ENCODE measurements at regions of chrX and their contacts with region 1.

Region 1: DNA sequence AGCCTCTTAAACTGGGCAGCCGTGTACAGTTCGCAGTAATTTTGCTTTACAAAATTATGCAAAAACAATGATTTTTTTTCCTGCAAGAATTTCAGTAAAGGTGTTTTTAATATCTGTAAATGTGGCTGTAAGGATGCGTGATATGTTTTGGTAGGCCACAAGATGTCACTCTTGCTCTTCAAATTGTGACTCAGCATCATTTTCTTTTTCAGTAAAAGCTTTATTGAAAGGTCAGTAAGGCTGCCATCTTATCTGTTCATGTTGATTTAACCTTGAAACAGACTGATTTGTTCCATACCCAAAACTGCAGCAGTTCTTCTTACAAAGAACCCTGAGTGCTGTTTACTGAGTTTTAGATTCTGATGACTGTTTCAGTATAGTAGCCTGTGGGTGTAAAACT is 39.9 kb downstream of the TXLNG start:
- DNase-seq: peak; percentile 41
- ATAC-seq: no peak
- H3K4me3 ChIP-seq: no peak overlapping the region
- H3K4me3 Mint-ChIP-seq: no peak overlapping the region
- H3K27ac ChIP-seq: no peak overlapping the region
- H3K27ac Mint-ChIP-seq: no peak overlapping the region
- H3K4me1 ChIP-seq: no peaks in the 10 kb centered on the region
- H3K4me1 Mint-ChIP-seq: no peaks in the 10 kb centered on the region
- H3K27me3 ChIP-seq: no peaks in the 10 kb centered on the region
- H3K27me3 Mint-ChIP-seq: no peaks in the 10 kb centered on the region
- CTCF ChIP-seq: peak; percentile 60

Region 2: GRCh38 chrX:16712112-16712833 is 113.9 kb before region 1 on chrX and contains the start of gene CTPS2:
- CTCF ChIA-PET with region 1: no interaction called
- POLR2A ChIA-PET with region 1: no interaction called
- intact Hi-C with region 1: no loop called
- DNase-seq: peak; percentile 53
- ATAC-seq: peak; percentile 72
- H3K4me3 ChIP-seq: peak within 1 kb of the TSS; percentile 19 to 74 (median 64)
- H3K4me3 Mint-ChIP-seq: peak within 1 kb of the TSS; percentile 89
- H3K27ac ChIP-seq: peak within 1 kb of the TSS; percentile 29 to 57
- H3K27ac Mint-ChIP-seq: peak within 1 kb of the TSS; percentile 86
- H3K4me1 ChIP-seq: peaks cover 12 to 13% of the 10 kb centered on the region in 2 donors
- H3K4me1 Mint-ChIP-seq: peaks cover 19% of the 10 kb centered on the region
- H3K27me3 ChIP-seq: no peaks in the 10 kb centered on the region
- H3K27me3 Mint-ChIP-seq: no peaks in the 10 kb centered on the region
- CTCF ChIP-seq: no peak
- total RNA-seq, gene CTPS2: 11.7 and 13.2 TPM in 2 replicates

Region 3: GRCh38 chrX:16771483-16772398 is 54.5 kb before region 1 on chrX:
- CTCF ChIA-PET with region 1: no interaction called
- POLR2A ChIA-PET with region 1: no interaction called
- intact Hi-C with region 1: no loop called
- DNase-seq: no peak
- ATAC-seq: no peak
- H3K4me3 ChIP-seq: no peak overlapping the region
- H3K4me3 Mint-ChIP-seq: no peak overlapping the region
- H3K27ac ChIP-seq: no peak overlapping the region
- H3K27ac Mint-ChIP-seq: no peak overlapping the region
- H3K4me1 ChIP-seq: no peaks in the 10 kb centered on the region
- H3K4me1 Mint-ChIP-seq: peaks cover 2% of the 10 kb centered on the region
- H3K27me3 ChIP-seq: no peaks in the 10 kb centered on the region
- H3K27me3 Mint-ChIP-seq: no peaks in the 10 kb centered on the region
- CTCF ChIP-seq: no peak

Region 4: DNA sequence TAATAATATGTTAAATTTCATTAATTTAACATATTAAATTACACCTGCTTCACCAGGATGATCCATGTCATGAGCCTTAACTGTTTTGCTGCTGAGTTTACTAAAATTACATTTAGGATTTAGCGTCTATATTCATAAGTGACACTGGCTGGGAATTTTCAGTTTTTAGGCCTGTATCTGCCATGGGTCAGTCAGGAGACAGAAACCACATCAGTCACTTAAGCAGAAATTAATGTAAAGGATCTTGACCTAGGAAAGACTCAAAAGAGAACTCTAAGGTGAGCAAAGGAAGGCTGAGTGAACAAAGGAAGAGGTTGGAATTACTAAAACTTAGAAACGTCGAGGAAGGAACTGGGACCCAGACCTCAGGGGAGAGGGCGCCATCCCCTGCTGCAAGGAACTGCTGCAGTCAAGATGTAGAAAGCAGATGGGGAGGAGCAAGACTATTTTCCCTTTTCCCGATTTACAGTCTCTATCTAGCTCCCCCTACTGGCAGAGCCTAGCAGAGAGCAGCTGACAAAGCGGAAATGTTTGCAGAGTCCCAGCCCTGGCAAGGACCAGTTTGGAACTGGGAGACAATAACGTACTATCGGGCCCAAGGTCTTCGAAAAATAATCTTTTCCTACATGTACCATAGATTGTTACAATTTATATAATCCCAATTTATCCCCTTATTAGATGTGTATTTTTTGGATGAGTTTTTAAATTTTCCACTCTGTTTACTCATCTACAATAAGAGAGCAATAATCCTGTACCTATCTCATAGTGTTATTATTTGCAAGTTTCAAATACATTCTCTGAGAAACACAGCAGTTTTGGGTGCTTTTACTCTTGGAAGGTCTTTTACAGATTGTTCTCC is 66.5 kb after region 1 on chrX:
- CTCF ChIA-PET with region 1: interaction called, 28 read pairs
- POLR2A ChIA-PET with region 1: no interaction called
- intact Hi-C with region 1: loop called (anchors 1 kb)
- DNase-seq: peak; percentile 76
- ATAC-seq: peak; percentile 84
- H3K4me3 ChIP-seq: no peak overlapping the region
- H3K4me3 Mint-ChIP-seq: peak overlapping the region; percentile 30
- H3K27ac ChIP-seq: no peak overlapping the region
- H3K27ac Mint-ChIP-seq: no peak overlapping the region
- H3K4me1 ChIP-seq: peaks cover 0 to 6% of the 10 kb centered on the region in 2 donors
- H3K4me1 Mint-ChIP-seq: peaks cover 7% of the 10 kb centered on the region
- H3K27me3 ChIP-seq: no peaks in the 10 kb centered on the region
- H3K27me3 Mint-ChIP-seq: no peaks in the 10 kb centered on the region
- CTCF ChIP-seq: peak; percentile 79

Region 5: GRCh38 chrX:17046478-17047097 is 220.4 kb after region 1 on chrX:
- CTCF ChIA-PET with region 1: interaction called, 90 read pairs
- POLR2A ChIA-PET with region 1: no interaction called
- intact Hi-C with region 1: no loop called
- DNase-seq: peak; percentile 61
- ATAC-seq: peak; percentile 45
- H3K4me3 ChIP-seq: no peak overlapping the region
- H3K4me3 Mint-ChIP-seq: no peak overlapping the region
- H3K27ac ChIP-seq: no peak overlapping the region
- H3K27ac Mint-ChIP-seq: no peak overlapping the region
- H3K4me1 ChIP-seq: peaks cover 0 to 2% of the 10 kb centered on the region in 2 donors
- H3K4me1 Mint-ChIP-seq: peaks cover 2% of the 10 kb centered on the region
- H3K27me3 ChIP-seq: no peaks in the 10 kb centered on the region
- H3K27me3 Mint-ChIP-seq: no peaks in the 10 kb centered on the region
- CTCF ChIP-seq: peak; percentile 68

Region 6: GRCh38 chrX:17082831-17083230 is 256.6 kb after region 1 on chrX:
- CTCF ChIA-PET with region 1: interaction called, 10 read pairs
- POLR2A ChIA-PET with region 1: no interaction called
- intact Hi-C with region 1: no loop called
- DNase-seq: peak; percentile 2
- ATAC-seq: no peak
- H3K4me3 ChIP-seq: no peak overlapping the region
- H3K4me3 Mint-ChIP-seq: no peak overlapping the region
- H3K27ac ChIP-seq: no peak overlapping the region
- H3K27ac Mint-ChIP-seq: no peak overlapping the region
- H3K4me1 ChIP-seq: no peaks in the 10 kb centered on the region
- H3K4me1 Mint-ChIP-seq: no peaks in the 10 kb centered on the region
- H3K27me3 ChIP-seq: no peaks in the 10 kb centered on the region
- H3K27me3 Mint-ChIP-seq: no peaks in the 10 kb centered on the region
- CTCF ChIP-seq: no peak